Lower leg skin (tissue), 4 donors: ENCODE measurements at regions of chr3 and their contacts with region 1.

Region 1: DNA sequence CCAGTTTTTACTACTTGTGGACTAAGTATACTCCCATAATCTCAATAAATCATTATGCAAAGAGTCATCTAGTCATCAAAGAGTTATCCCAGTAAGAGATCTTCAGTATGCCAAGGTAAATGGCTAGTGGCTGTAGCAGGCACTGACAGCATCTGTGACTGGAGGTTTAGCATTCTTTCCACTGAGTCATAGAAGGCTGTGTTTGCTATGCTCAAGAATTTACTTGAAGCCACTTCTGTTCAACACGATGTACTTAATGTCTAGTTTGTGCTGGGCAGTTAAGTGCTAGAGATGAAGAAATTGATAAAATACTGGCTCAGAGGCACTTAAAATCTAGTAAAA is 13.1 kb downstream of the ZBED2 start:
- DNase-seq: no peak
- H3K4me3 ChIP-seq: no peak overlapping the region
- CTCF ChIP-seq: no peak
- POLR2A ChIP-seq: no peak

Region 2: GRCh38 chr3:111616417-111617105 is 34.5 kb after region 1 on chr3:
- intact Hi-C with region 1: no loop called
- DNase-seq: no peak
- H3K4me3 ChIP-seq: no peak overlapping the region
- CTCF ChIP-seq: no peak
- POLR2A ChIP-seq: no peak

Region 3: GRCh38 chr3:111681661-111682426 is 99.8 kb after region 1 on chr3:
- intact Hi-C with region 1: loop called (anchors 10 kb)
- DNase-seq: no peak
- H3K4me3 ChIP-seq: no peak overlapping the region
- CTCF ChIP-seq: no peak
- POLR2A ChIP-seq: no peak

Region 4: DNA sequence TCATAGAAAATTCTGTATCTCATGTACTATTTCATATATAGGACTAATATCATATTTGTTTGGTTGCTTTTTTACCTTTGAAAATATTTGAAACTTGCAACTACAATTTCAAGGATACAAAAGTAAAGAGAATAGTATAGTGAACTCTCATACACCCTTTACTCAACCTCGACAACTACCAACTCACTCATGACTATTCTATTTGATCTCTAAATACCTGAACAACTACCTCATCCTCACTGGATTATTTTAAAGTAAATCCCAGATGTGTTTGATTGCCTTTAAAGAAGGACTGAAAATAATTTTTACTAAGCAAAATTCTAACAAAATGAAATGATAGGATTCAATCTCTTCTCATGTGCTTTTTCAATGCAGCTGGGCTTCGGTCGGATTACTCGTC is 464.5 kb after region 1 on chr3:
- intact Hi-C with region 1: no loop called
- DNase-seq: no peak
- H3K4me3 ChIP-seq: no peak overlapping the region
- CTCF ChIP-seq: no peak
- POLR2A ChIP-seq: no peak